ENCODE measurements at regions of chr2 and their contacts with region 1.

Region 1: GRCh38 chr2:109331896-109332848 is 203.2 kb downstream of the SH3RF3 start:
- DNase-seq: peak in 1 of 2 experiments; percentile 10
- H3K4me3 ChIP-seq: no peak overlapping the region
- H3K27ac ChIP-seq: no peak overlapping the region
- H3K4me1 ChIP-seq: peaks cover 0 to 9% (median 4%) of the 10 kb centered on the region in 4 experiments; a peak in 3 of 7 replicates
- H3K27me3 ChIP-seq: no peaks in the 10 kb centered on the region
- CTCF ChIP-seq: no peak
- EP300 ChIP-seq: no peak
- POLR2A ChIP-seq: no peak
- RAD21 ChIP-seq: no peak

Region 2: GRCh38 chr2:109311771-109312170 is 20.4 kb before region 1 on chr2:
- CTCF ChIA-PET with region 1: no interaction called
- POLR2A ChIA-PET with region 1: no interaction called
- DNase-seq: no peak
- H3K4me3 ChIP-seq: no peak overlapping the region
- H3K27ac ChIP-seq: no peak overlapping the region
- H3K4me1 ChIP-seq: peaks cover 0 to under 1% (median 0%) of the 10 kb centered on the region in 4 experiments; a peak in 1 of 7 replicates
- H3K27me3 ChIP-seq: no peaks in the 10 kb centered on the region
- CTCF ChIP-seq: no peak
- EP300 ChIP-seq: no peak
- POLR2A ChIP-seq: no peak
- RAD21 ChIP-seq: no peak

Region 3: GRCh38 chr2:109322111-109322510 is 10.1 kb before region 1 on chr2:
- CTCF ChIA-PET with region 1: interaction called, 12 read pairs
- POLR2A ChIA-PET with region 1: no interaction called
- DNase-seq: no peak
- H3K4me3 ChIP-seq: no peak overlapping the region
- H3K27ac ChIP-seq: no peak overlapping the region
- H3K4me1 ChIP-seq: peaks cover 0 to 8% (median 0%) of the 10 kb centered on the region in 4 experiments; a peak in 1 of 7 replicates
- H3K27me3 ChIP-seq: no peaks in the 10 kb centered on the region
- CTCF ChIP-seq: no peak
- EP300 ChIP-seq: no peak
- POLR2A ChIP-seq: no peak
- RAD21 ChIP-seq: no peak